Ovary (tissue), 10 donors: ENCODE measurements at regions of chr11 and their contacts with region 1.

Region 1: GRCh38 chr11:615504-616319 is at the start of gene IRF7:
- DNase-seq: peak; percentile 88 to 93 (median 91)
- H3K4me3 ChIP-seq: peak within 1 kb of the TSS; percentile 59
- H3K27ac ChIP-seq: peak within 1 kb of the TSS; percentile 62 to 80
- H3K4me1 ChIP-seq: peaks cover 8% of the 10 kb centered on the region
- H3K27me3 ChIP-seq: no peaks in the 10 kb centered on the region
- CTCF ChIP-seq: no peak
- EP300 ChIP-seq: no peak
- POLR2A ChIP-seq: peak; percentile 62
- total RNA-seq, gene IRF7: 8.2 to 59.1 (median 17.1) TPM

Region 2: DNA sequence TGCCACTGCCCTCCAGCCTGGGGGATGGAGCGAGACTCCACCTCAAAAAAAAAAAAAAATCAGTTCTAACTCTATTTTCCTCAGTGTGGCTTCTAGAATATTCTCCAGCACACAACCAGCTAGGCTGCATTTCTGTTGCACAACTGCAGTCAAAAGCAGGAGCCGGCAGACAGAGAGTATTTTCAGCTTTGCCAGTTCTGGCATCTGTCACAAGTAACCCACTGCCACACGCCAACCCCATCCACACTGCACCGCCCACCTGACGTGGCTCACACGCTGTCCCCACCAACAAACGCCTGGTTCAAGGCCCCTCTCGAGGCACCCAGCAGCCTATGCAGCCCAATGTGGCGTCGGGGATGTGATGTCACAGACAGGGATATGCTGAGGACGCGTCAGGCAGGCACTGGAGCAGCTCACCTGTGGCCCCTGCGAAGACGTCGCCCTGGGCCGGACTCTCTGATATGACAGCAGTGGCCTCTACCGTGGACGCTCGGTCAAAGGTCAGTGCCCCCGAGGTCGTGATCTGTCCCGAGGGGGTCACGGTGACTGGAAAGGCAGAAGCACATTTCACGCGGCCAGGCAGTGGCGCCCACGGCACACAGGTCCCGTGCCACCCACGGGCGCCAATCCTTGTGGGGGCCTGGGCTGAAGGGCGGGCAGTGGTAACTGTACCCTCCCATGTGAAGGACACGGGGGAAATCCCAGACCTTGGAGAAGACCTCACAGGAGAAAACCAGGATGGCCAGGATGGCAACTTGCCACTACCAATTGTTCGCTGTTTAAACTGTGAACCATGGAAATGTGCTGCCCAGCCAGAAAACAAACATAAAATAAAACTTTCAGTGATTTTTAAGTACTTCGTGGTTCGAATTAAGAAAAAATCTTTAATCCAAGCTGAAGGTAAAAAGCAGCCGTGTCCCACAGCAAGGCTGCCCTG is 63.8 kb after region 1 on chr11:
- intact Hi-C with region 1: loop called in 1 of 4 experiments (anchors 10 kb)
- DNase-seq: no peak
- H3K4me3 ChIP-seq: no peak overlapping the region
- H3K27ac ChIP-seq: no peak overlapping the region
- H3K4me1 ChIP-seq: no peaks in the 10 kb centered on the region
- H3K27me3 ChIP-seq: no peaks in the 10 kb centered on the region
- CTCF ChIP-seq: no peak
- EP300 ChIP-seq: no peak
- POLR2A ChIP-seq: no peak